GM10248 (cell line): ENCODE measurements at regions of chr16 and their contacts with region 1.

Region 1: DNA sequence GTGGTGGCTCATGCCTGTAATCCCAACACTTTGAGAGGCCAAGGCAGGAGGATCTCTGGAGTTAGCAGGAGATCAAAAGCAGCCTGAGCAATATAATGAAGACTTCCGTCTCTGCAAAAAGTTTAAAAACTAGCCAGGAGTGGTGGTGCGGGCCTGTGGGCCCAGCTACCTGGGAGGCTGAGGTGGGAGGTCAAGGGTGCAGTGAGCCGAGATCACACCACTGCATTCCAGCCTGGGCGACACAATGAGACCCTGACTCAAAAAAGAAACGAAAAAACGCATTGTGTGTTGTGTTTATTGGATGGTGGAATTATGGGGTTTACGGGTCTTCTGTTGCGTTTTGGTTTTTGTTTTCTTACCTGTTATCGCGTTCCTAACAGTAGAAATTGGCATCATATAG is 863 bp upstream of the DDX19A start:
- DNase-seq: no peak
- CTCF ChIP-seq: no peak

Region 2: GRCh38 chr16:70380861-70381603 is 35.2 kb after region 1 on chr16:
- CTCF ChIA-PET with region 1: no interaction called
- POLR2A ChIA-PET with region 1: interaction called, 11 read pairs
- DNase-seq: peak; percentile 96
- CTCF ChIP-seq: peak; percentile 33